Left lung (tissue), 14 donors: ENCODE measurements at regions of chr1 and their contacts with region 1.

Region 1: GRCh38 chr1:247487057-247487456 is 29.2 kb upstream of the OR2B11 start:
- DNase-seq: peak in 2 of 4 donors; percentile 10 to 35
- ATAC-seq: peak; percentile 61
- H3K4me3 ChIP-seq: no peak overlapping the region
- H3K27ac ChIP-seq: no peak overlapping the region
- H3K4me1 ChIP-seq: no peaks in the 10 kb centered on the region
- H3K27me3 ChIP-seq: no peaks in the 10 kb centered on the region
- CTCF ChIP-seq: peak; percentile 13 to 39

Region 2: GRCh38 chr1:247386687-247387086 is 100.4 kb before region 1 on chr1:
- intact Hi-C with region 1: loop called in 1 of 2 experiments (anchors 10 kb)
- DNase-seq: no peak
- ATAC-seq: no peak
- H3K4me3 ChIP-seq: no peak overlapping the region
- H3K27ac ChIP-seq: no peak overlapping the region
- H3K4me1 ChIP-seq: peaks cover 0 to 26% of the 10 kb centered on the region in 2 donors
- H3K27me3 ChIP-seq: no peaks in the 10 kb centered on the region
- CTCF ChIP-seq: no peak

Region 3: GRCh38 chr1:247948558-247948957 is 461.5 kb after region 1 on chr1 and contains the start of gene OR2L8:
- intact Hi-C with region 1: no loop called
- DNase-seq: no peak
- ATAC-seq: no peak
- H3K4me3 ChIP-seq: no peak within 1 kb of the TSS
- H3K27ac ChIP-seq: no peak within 1 kb of the TSS
- H3K4me1 ChIP-seq: no peaks in the 10 kb centered on the region
- H3K27me3 ChIP-seq: no peaks in the 10 kb centered on the region
- CTCF ChIP-seq: no peak
- polyA plus RNA-seq, gene OR2L8: not detected